Activated CD4-positive, alpha-beta T cell treated with anti-CD3 and anti-CD28 coated beads, Interleukin-2, amount 10 ng/mL, durations not matched to agents 7 days and 5 days (primary cell): ENCODE measurements at regions of chr10 and their contacts with region 1.

Region 1: GRCh38 chr10:114526504-114527238 is 122.4 kb upstream of the AFAP1L2 start:
- DNase-seq: peak; percentile 96
- H3K4me3 Mint-ChIP-seq: peak overlapping the region; percentile 94
- H3K27ac Mint-ChIP-seq: peak overlapping the region; percentile 97
- H3K4me1 Mint-ChIP-seq: peaks cover 63% of the 10 kb centered on the region
- H3K27me3 Mint-ChIP-seq: no peaks in the 10 kb centered on the region

Region 2: GRCh38 chr10:114470956-114471905 is 55.4 kb before region 1 on chr10:
- CTCF ChIA-PET with region 1: interaction called, 10 read pairs
- POLR2A ChIA-PET with region 1: no interaction called
- DNase-seq: peak; percentile 75
- H3K4me3 Mint-ChIP-seq: no peak overlapping the region
- H3K27ac Mint-ChIP-seq: peak overlapping the region; percentile 10
- H3K4me1 Mint-ChIP-seq: peaks cover 41% of the 10 kb centered on the region
- H3K27me3 Mint-ChIP-seq: no peaks in the 10 kb centered on the region

Region 3: GRCh38 chr10:114515298-114515914 is 11.3 kb before region 1 on chr10:
- CTCF ChIA-PET with region 1: interaction called, 10 read pairs
- POLR2A ChIA-PET with region 1: no interaction called
- DNase-seq: no peak
- H3K4me3 Mint-ChIP-seq: peak overlapping the region; percentile 22
- H3K27ac Mint-ChIP-seq: peak overlapping the region; percentile 42
- H3K4me1 Mint-ChIP-seq: peaks cover 92% of the 10 kb centered on the region
- H3K27me3 Mint-ChIP-seq: no peaks in the 10 kb centered on the region

Region 4: GRCh38 chr10:114541081-114541796 is 14.6 kb after region 1 on chr10:
- CTCF ChIA-PET with region 1: interaction called, 51 read pairs
- POLR2A ChIA-PET with region 1: interaction called, 10 read pairs
- DNase-seq: peak; percentile 86
- H3K4me3 Mint-ChIP-seq: peak overlapping the region; percentile 41
- H3K27ac Mint-ChIP-seq: peak overlapping the region; percentile 97
- H3K4me1 Mint-ChIP-seq: peaks cover 96% of the 10 kb centered on the region
- H3K27me3 Mint-ChIP-seq: no peaks in the 10 kb centered on the region

Region 5: GRCh38 chr10:114663626-114664025 is 137.0 kb after region 1 on chr10:
- CTCF ChIA-PET with region 1: no interaction called
- POLR2A ChIA-PET with region 1: no interaction called
- DNase-seq: no peak
- H3K4me3 Mint-ChIP-seq: no peak overlapping the region
- H3K27ac Mint-ChIP-seq: no peak overlapping the region
- H3K4me1 Mint-ChIP-seq: no peaks in the 10 kb centered on the region
- H3K27me3 Mint-ChIP-seq: peaks cover 20% of the 10 kb centered on the region